ENCODE measurements at regions of chr7 and their contacts with region 1.

Region 1: DNA sequence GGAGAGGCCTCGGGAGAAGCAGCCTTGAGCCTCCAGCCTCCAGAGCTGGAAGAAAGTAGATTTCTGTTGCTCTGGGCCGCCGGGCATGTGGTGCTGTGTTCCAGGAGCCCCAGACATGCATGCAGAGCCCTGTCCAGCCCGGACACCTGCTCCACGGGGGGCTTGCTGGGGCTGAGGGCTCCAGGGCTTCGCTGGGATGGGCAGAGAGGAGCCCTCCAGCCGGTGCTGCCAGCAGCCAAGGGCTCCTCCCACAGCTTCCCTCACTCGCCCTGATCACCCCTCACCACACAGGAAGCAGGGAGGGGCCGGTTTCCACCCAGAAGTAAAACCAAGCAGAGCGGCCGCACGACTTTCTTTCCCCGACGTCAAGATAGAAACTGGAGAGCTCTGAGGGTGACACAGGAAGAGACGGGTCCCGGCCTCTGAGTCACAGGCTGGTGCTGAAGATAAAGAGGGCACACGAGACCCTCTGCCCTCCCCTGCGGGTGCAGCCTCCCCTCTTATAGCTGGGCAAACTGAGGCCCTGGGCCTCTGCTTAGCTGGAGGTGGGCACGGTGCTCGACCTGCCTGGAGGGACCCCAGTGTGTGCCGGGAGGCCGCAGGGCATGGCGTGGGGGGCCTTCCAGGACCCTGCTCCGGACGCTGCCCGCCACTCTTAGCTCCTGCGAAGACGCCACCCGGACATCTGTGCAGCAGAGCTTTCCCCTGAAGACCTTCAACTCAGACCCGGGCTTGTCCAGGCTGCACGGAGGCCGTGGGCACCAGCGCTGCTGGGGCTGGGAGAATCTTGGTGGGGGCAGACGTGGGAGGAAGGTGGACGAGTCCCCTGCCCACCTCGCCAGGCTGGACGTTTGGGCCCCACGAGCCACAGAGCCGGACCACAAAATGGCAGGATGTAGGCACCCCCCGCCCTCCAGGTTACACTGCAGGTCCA is 31.1 kb downstream of the ADAP1 start:
- DNase-seq: peak; percentile 90 to 97 (median 90)
- H3K4me3 ChIP-seq: peak overlapping the region; percentile 76 to 85
- H3K4me3 Mint-ChIP-seq: peak overlapping the region; percentile 84 to 90 (median 88)
- H3K27ac ChIP-seq: peak overlapping the region; percentile 89
- H3K27ac Mint-ChIP-seq: peak overlapping the region; percentile 91 to 97 (median 95)
- H3K4me1 ChIP-seq: peaks cover 34% of the 10 kb centered on the region
- H3K4me1 Mint-ChIP-seq: peaks cover 7 to 30% (median 11%) of the 10 kb centered on the region in 4 donors
- H3K27me3 ChIP-seq: no peaks in the 10 kb centered on the region
- H3K27me3 Mint-ChIP-seq: no peaks in the 10 kb centered on the region

Region 2: DNA sequence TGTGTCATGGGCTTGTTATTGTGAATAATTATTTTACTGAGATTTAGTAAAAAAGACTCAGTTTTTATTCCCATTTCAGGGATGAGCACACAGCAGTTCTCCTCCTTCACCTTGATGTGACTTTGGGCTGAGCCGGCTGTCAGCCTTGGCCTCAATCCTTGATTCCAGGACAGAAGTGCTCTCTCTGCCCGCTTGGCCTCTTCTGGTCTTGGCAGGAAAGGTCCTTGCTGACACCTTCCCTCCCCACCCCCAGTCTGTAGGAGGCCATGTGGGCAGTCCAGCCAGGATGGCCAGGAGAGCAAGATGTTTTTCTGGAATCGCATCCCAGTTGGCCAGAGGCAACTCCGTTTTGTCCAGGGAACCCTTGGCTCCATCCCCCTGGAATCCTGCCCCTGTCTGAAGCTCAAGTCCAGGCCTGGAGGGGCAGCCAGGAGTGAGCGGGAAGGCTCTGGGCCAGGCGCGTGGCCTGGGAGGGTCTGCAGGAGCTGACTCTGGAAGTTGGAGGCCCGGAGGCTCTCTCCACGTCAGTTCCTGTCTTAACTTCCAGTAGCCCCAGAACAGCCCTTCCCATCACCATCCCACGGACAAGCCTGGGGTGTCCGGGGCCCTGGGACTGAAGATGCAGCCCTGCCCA is 504.6 kb before region 1 on chr7:
- CTCF ChIA-PET with region 1: no interaction called
- POLR2A ChIA-PET with region 1: no interaction called
- intact Hi-C with region 1: no loop called
- DNase-seq: no peak
- H3K4me3 ChIP-seq: no peak overlapping the region
- H3K4me3 Mint-ChIP-seq: no peak overlapping the region
- H3K27ac ChIP-seq: no peak overlapping the region
- H3K27ac Mint-ChIP-seq: no peak overlapping the region
- H3K4me1 ChIP-seq: no peaks in the 10 kb centered on the region
- H3K4me1 Mint-ChIP-seq: no peaks in the 10 kb centered on the region
- H3K27me3 ChIP-seq: no peaks in the 10 kb centered on the region
- H3K27me3 Mint-ChIP-seq: no peaks in the 10 kb centered on the region

Region 3: DNA sequence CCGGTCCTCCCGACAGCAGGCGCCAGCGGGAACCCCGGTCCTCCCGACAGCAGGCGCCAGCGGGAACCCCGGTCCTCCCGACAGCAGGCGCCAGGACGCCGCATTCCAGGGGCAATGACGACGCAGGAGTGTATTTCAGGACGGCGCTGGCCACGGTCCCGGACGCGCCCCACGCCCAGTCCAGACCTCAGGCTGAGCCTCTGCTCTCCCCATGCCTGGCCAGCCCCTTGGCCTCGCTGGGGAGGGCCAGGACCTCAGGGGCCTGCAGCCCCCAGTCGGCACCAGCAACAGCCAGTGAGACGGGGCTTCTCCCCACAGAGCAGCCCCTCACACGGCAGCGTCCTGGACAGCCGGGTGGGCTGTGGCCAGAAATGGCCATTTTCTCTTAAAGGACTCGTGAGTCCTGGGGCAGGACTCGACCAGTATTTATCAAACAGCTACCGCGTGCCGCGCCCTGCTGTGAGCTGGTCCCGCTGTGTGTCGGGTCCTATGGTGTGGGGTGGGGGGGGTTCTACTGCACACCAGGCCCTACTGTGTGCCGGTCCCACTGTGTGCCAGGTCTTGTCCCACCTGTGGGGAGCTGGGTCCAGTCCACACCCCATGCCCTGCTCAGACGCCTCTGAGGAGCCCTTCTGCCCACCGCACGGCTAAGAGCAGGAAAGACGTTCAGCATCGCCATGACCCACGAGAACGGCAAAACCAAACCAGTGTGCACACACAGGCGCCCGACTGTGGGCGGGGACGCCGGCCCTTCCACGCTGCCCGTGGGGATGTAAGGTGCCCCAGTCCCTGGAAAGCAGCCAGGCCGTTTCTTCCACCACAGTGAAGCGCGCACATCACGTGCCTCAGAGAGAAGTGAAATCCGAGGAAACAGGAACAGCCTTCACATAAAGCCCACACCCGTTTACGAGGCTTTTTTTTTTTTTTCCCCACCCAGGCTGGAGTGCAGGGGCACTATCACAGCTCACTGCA is 13.7 kb before region 1 on chr7:
- CTCF ChIA-PET with region 1: interaction called, 19 read pairs
- POLR2A ChIA-PET with region 1: interaction called, 63 read pairs
- intact Hi-C with region 1: loop called (anchors 1 kb)
- DNase-seq: peak in 1 of 5 donors; percentile 46
- H3K4me3 ChIP-seq: no peak overlapping the region
- H3K4me3 Mint-ChIP-seq: peak overlapping the region; percentile 35 to 77 (median 72)
- H3K27ac ChIP-seq: no peak overlapping the region
- H3K27ac Mint-ChIP-seq: peak overlapping the region in 3 of 7 donors; percentile 65 to 68 (median 67)
- H3K4me1 ChIP-seq: peaks cover 10% of the 10 kb centered on the region
- H3K4me1 Mint-ChIP-seq: peaks cover 2 to 14% (median 10%) of the 10 kb centered on the region in 4 donors
- H3K27me3 ChIP-seq: no peaks in the 10 kb centered on the region
- H3K27me3 Mint-ChIP-seq: no peaks in the 10 kb centered on the region

Region 4: GRCh38 chr7:939843-940242 is 16.5 kb after region 1 on chr7:
- CTCF ChIA-PET with region 1: no interaction called
- POLR2A ChIA-PET with region 1: interaction called, 4 read pairs
- intact Hi-C with region 1: loop called (anchors 2 kb)
- DNase-seq: no peak
- H3K4me3 ChIP-seq: no peak overlapping the region
- H3K4me3 Mint-ChIP-seq: no peak overlapping the region
- H3K27ac ChIP-seq: no peak overlapping the region
- H3K27ac Mint-ChIP-seq: no peak overlapping the region
- H3K4me1 ChIP-seq: peaks cover 5% of the 10 kb centered on the region
- H3K4me1 Mint-ChIP-seq: peaks cover 4 to 9% (median 6%) of the 10 kb centered on the region in 4 donors
- H3K27me3 ChIP-seq: no peaks in the 10 kb centered on the region
- H3K27me3 Mint-ChIP-seq: peaks cover 0 to 2% of the 10 kb centered on the region in 2 donors

Region 5: DNA sequence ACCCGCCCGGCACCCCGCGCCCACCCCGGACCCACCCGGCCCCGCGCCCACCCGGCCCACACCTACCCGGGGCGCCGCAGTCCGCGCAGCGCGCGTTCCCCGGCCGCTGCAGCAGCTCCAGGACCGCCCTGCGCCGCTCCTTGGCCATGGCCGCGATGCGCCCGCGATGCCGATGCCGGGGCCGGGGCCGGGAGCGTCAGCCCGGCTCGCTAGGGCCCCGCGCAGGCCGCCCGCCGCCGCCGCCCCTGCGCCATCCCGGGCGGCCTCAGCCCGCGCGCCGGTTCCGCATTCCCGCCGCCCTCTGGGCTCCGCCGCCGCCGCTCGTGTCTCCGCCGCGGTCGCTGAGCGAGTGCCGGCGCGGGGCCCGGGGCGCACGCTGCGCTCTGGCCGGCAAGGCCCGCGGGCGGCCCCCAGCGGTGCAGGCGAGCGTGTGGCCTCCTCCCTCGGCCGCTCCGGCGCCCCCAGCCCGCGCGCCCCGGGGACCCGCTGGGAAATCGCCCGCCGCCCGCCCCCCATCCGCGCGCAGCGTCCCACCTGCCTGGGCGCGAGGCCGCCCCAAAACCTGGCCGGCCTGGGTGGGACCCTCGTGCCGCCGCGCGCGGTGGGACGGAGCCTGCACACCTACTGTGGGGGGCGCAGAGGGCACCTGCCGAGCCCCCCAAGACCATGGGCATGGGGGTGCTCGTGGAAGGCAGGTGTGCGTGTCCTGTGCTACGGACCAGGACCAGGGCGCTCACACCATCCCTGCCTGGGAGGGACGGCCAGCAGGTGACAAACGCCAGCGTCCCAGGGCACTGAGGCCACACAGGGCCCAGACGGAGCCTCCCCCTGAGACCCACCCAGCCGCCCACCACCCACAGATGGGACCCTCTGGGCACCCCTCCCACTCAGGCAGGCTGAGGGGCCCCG is 31.2 kb after region 1 on chr7 and contains the start of gene ADAP1:
- CTCF ChIA-PET with region 1: interaction called, 5 read pairs
- POLR2A ChIA-PET with region 1: interaction called, 12 read pairs
- intact Hi-C with region 1: loop called (anchors 1 kb)
- DNase-seq: peak in 4 of 5 donors; percentile 55 to 64 (median 60)
- H3K4me3 ChIP-seq: no peak within 1 kb of the TSS
- H3K4me3 Mint-ChIP-seq: peak within 1 kb of the TSS; percentile 62 to 80 (median 72)
- H3K27ac ChIP-seq: no peak within 1 kb of the TSS
- H3K27ac Mint-ChIP-seq: peak within 1 kb of the TSS in 2 of 7 donors; percentile 69 to 83
- H3K4me1 ChIP-seq: peaks cover 5% of the 10 kb centered on the region
- H3K4me1 Mint-ChIP-seq: peaks cover 0 to 9% (median 0%) of the 10 kb centered on the region in 4 donors
- H3K27me3 ChIP-seq: no peaks in the 10 kb centered on the region
- H3K27me3 Mint-ChIP-seq: peaks cover 2 to 4% of the 10 kb centered on the region in 2 donors
- total RNA-seq, gene ADAP1: 9.7 to 10.0 TPM

Region 6: GRCh38 chr7:974820-975681 is 51.7 kb after region 1 on chr7 and contains the start of gene COX19:
- CTCF ChIA-PET with region 1: interaction called, 8 read pairs
- POLR2A ChIA-PET with region 1: interaction called, 78 read pairs
- intact Hi-C with region 1: loop called (anchors 1 kb)
- DNase-seq: peak; percentile 87 to 94 (median 88)
- H3K4me3 ChIP-seq: peak within 1 kb of the TSS; percentile 58 to 94
- H3K4me3 Mint-ChIP-seq: peak within 1 kb of the TSS; percentile 89 to 96 (median 94)
- H3K27ac ChIP-seq: peak within 1 kb of the TSS; percentile 99
- H3K27ac Mint-ChIP-seq: peak within 1 kb of the TSS; percentile 90 to 97 (median 93)
- H3K4me1 ChIP-seq: peaks cover 38% of the 10 kb centered on the region
- H3K4me1 Mint-ChIP-seq: peaks cover 13 to 37% (median 26%) of the 10 kb centered on the region in 4 donors
- H3K27me3 ChIP-seq: no peaks in the 10 kb centered on the region
- H3K27me3 Mint-ChIP-seq: no peaks in the 10 kb centered on the region
- total RNA-seq, gene COX19: 46.2 to 50.0 TPM

Region 7: DNA sequence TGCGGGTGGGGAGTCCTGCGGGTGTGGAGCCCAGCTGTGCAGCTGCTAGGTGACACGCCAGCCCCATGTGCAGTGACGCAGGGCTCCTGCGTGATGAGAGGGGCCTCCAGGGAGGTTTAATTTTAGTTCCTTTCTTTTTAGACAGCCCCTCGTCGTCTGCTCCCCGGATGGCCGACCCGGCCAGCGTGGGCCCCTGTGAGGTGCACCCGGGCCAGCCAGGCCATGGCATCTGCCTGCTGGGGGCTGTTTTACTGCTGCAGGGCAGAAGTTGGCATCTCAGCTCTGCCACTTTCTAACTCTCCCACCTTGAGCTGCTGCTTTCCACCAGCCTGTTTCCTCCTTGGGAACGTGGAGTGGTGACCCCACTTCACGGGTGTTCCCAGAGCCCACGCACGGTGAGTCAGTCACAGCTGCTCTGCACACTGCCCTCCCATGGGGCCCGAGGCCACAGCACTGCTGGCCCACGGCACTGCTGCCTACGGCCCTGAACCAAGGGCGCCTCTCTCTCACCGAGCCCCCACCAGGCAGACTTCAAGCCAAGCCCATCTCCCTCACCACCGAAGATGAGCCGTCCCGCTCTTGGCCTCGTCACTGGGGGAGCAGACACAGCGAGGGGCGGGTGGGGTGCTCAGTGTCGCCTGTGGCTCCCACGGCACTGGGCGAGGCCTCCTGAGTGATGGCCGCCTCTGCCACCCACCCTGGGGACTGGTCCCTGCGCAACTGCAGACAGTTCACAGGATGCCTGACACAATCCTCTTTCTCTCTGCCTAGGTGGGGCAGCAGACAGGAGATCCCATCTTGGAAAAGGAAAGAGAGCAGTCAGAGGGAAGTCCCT is 80.9 kb after region 1 on chr7:
- CTCF ChIA-PET with region 1: no interaction called
- POLR2A ChIA-PET with region 1: no interaction called
- intact Hi-C with region 1: no loop called
- DNase-seq: no peak
- H3K4me3 ChIP-seq: no peak overlapping the region
- H3K4me3 Mint-ChIP-seq: no peak overlapping the region
- H3K27ac ChIP-seq: no peak overlapping the region
- H3K27ac Mint-ChIP-seq: no peak overlapping the region
- H3K4me1 ChIP-seq: no peaks in the 10 kb centered on the region
- H3K4me1 Mint-ChIP-seq: peaks cover 2 to 7% (median 5%) of the 10 kb centered on the region in 4 donors
- H3K27me3 ChIP-seq: no peaks in the 10 kb centered on the region
- H3K27me3 Mint-ChIP-seq: no peaks in the 10 kb centered on the region

Region 8: GRCh38 chr7:1044191-1045068 is 121.1 kb after region 1 on chr7 and contains the start of gene GPR146:
- CTCF ChIA-PET with region 1: no interaction called
- POLR2A ChIA-PET with region 1: interaction called, 9 read pairs
- intact Hi-C with region 1: loop called (anchors 2 kb)
- DNase-seq: peak; percentile 85 to 89 (median 86)
- H3K4me3 ChIP-seq: peak within 1 kb of the TSS; percentile 67 to 69
- H3K4me3 Mint-ChIP-seq: peak within 1 kb of the TSS; percentile 88 to 96 (median 92)
- H3K27ac ChIP-seq: peak within 1 kb of the TSS; percentile 55
- H3K27ac Mint-ChIP-seq: peak within 1 kb of the TSS; percentile 83 to 94 (median 91)
- H3K4me1 ChIP-seq: peaks cover 70% of the 10 kb centered on the region
- H3K4me1 Mint-ChIP-seq: peaks cover 49 to 74% (median 65%) of the 10 kb centered on the region in 4 donors
- H3K27me3 ChIP-seq: no peaks in the 10 kb centered on the region
- H3K27me3 Mint-ChIP-seq: no peaks in the 10 kb centered on the region
- total RNA-seq, gene GPR146: 8.8 to 10.1 TPM